Mammary epithelial cell (primary cell): ENCODE measurements at regions of chr3 and their contacts with region 1.

Region 1: GRCh38 chr3:161371430-161372326 is at the start of gene SPTSSB:
- DNase-seq: peak; percentile 72
- H3K4me3 ChIP-seq: peak within 1 kb of the TSS; percentile 54 to 61 (median 56)
- H3K27ac ChIP-seq: no peak within 1 kb of the TSS
- H3K4me1 ChIP-seq: peaks cover 16% of the 10 kb centered on the region
- H3K27me3 ChIP-seq: no peaks in the 10 kb centered on the region
- CTCF ChIP-seq: peak in 1 of 2 donors; percentile 26
- total RNA-seq, gene SPTSSB: 0.17 TPM in 1 of 2 donors, not detected in the other

Region 2: DNA sequence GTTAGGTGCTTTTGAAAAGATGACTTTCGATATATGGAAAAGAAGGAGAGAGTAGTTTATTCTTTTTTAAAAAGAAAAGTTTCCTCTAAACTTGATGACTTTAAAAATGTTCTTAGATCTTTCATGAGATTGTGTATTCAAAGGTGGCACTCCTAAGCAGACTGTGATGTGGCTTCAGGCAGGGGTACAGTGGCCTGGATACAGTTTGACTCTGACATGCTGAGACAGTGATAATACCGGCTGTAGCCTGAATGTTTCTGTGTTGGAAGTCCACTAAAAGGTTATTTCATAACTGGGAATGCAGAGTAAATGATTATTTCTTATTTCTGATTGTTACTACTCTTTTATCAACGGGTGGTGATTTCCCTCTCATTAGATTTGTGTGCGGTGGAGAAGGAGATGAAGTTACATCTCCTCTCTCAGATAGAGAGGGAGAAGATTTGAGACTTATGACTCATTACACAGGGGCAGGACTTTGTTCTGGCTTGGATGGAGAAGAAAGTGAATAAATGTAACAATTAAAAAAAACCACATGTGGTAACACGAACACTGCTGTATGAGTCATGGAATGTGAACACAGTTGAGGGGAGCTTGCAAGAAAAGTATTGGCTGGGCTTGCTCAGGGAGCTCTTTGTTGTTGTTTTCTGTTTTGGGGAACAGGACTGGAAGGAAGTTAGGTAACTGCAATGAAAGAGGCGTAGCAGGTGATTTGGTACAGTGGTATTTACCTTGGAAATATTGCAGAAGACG is 22.0 kb before region 1 on chr3:
- CTCF ChIA-PET with region 1: no interaction called
- dilution Hi-C with region 1: no loop called
- in situ Hi-C with region 1: no loop called
- intact Hi-C with region 1: loop called (anchors 2 kb)
- DNase-seq: peak; percentile 98
- H3K4me3 ChIP-seq: no peak overlapping the region
- H3K27ac ChIP-seq: no peak overlapping the region
- H3K4me1 ChIP-seq: peaks cover 25% of the 10 kb centered on the region
- H3K27me3 ChIP-seq: no peaks in the 10 kb centered on the region
- CTCF ChIP-seq: no peak

Region 3: GRCh38 chr3:161386991-161387746 is 15.5 kb after region 1 on chr3:
- CTCF ChIA-PET with region 1: no interaction called
- dilution Hi-C with region 1: no loop called
- in situ Hi-C with region 1: no loop called
- intact Hi-C with region 1: loop called (anchors 2 kb)
- DNase-seq: no peak
- H3K4me3 ChIP-seq: no peak overlapping the region
- H3K27ac ChIP-seq: no peak overlapping the region
- H3K4me1 ChIP-seq: no peaks in the 10 kb centered on the region
- H3K27me3 ChIP-seq: no peaks in the 10 kb centered on the region
- CTCF ChIP-seq: no peak